PC-3 (cell line): ENCODE measurements at regions of chr7 and their contacts with region 1.

Region 1: GRCh38 chr7:11557627-11558026 is 274.4 kb downstream of the THSD7A start:
- DNase-seq: peak; percentile 48
- ATAC-seq: peak; percentile 96
- H3K4me3 ChIP-seq: no peak overlapping the region
- H3K27ac ChIP-seq: no peak overlapping the region
- H3K4me1 ChIP-seq: no peaks in the 10 kb centered on the region
- H3K27me3 ChIP-seq: no peaks in the 10 kb centered on the region
- CTCF ChIP-seq: peak; percentile 53

Region 2: DNA sequence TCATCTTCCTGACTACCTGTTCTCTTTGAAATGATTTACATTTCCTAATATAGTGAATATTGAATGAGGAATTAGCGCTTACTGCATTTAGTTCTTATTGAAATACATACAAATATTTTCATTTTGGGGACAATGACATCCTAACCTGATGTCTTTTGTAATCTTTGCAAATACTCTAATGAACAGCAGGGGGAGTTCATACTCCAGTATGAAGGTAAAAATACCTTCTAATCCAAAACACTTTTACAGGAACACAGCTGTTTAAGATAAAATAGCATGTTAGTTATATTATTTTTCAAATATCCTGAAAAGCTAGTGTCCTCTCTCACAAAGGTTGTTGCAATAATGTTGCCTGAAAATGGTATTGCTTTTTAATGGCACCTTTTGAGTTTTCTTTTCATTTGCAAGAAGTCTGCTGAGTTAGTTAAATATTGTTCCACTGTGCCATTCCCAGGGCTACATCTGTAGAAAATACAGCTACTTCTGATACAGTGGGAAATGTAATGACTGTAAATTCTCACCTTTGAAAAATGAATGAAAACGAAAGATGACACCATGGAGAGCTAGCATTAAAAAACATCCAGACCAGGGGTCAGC is 184.0 kb before region 1 on chr7:
- CTCF ChIA-PET with region 1: no interaction called
- POLR2A ChIA-PET with region 1: no interaction called
- intact Hi-C with region 1: loop called (anchors 5 kb)
- DNase-seq: peak; percentile 54
- ATAC-seq: peak; percentile 62; the same call in 1 of the 2 replicates
- H3K4me3 ChIP-seq: no peak overlapping the region
- H3K27ac ChIP-seq: no peak overlapping the region
- H3K4me1 ChIP-seq: no peaks in the 10 kb centered on the region
- H3K27me3 ChIP-seq: 0 out of 2 replicates have a peak, but pooled peaks cover 12% of the 10 kb centered on the region
- CTCF ChIP-seq: peak; percentile 75

Region 3: GRCh38 chr7:11427686-11428273 is 129.8 kb before region 1 on chr7:
- CTCF ChIA-PET with region 1: no interaction called
- POLR2A ChIA-PET with region 1: no interaction called
- intact Hi-C with region 1: loop called (anchors 1 kb)
- DNase-seq: peak; percentile 74
- ATAC-seq: peak; percentile 62
- H3K4me3 ChIP-seq: no peak overlapping the region
- H3K27ac ChIP-seq: no peak overlapping the region
- H3K4me1 ChIP-seq: no peaks in the 10 kb centered on the region
- H3K27me3 ChIP-seq: no peaks in the 10 kb centered on the region
- CTCF ChIP-seq: peak; percentile 87

Region 4: GRCh38 chr7:11486271-11486670 is 71.4 kb before region 1 on chr7:
- CTCF ChIA-PET with region 1: no interaction called
- POLR2A ChIA-PET with region 1: no interaction called
- intact Hi-C with region 1: loop called (anchors 1 kb)
- DNase-seq: peak; percentile 23
- ATAC-seq: peak; percentile 27; the same call in 1 of the 2 replicates
- H3K4me3 ChIP-seq: no peak overlapping the region
- H3K27ac ChIP-seq: no peak overlapping the region
- H3K4me1 ChIP-seq: no peaks in the 10 kb centered on the region
- H3K27me3 ChIP-seq: no peaks in the 10 kb centered on the region
- CTCF ChIP-seq: peak; percentile 47; the same call in 1 of the 2 replicates

Region 5: DNA sequence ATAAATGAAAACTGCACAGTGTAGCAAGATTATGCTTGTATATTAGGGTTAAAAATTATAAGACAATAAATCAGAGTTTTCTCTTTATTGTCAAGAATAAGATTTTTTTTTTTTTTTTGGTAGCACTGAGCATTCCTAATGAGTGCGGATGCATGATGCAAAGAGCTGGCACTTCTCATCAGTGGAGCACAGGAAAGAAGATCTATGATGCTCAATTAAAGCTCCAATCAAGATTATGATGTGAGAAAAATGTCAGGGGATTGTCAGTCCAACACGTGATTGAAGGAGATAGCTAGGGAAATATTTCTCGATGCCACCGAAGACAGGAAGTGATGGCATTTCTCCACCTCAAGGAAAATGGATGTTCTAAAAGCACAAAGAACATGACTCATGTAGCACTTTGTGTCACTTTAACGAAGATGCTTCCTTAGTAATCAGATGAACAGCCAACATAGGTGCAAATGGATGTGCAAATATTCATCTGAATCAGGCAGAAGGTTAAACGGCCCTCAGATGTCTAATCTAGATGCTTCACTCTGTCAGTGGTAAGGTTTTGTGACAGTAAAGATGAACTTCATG is 33.5 kb after region 1 on chr7:
- CTCF ChIA-PET with region 1: no interaction called
- POLR2A ChIA-PET with region 1: no interaction called
- intact Hi-C with region 1: no loop called
- DNase-seq: no peak
- ATAC-seq: no peak
- H3K4me3 ChIP-seq: no peak overlapping the region
- H3K27ac ChIP-seq: no peak overlapping the region
- H3K4me1 ChIP-seq: peaks cover 9% of the 10 kb centered on the region
- H3K27me3 ChIP-seq: no peaks in the 10 kb centered on the region
- CTCF ChIP-seq: no peak